ENCODE measurements at regions of chr1 and their contacts with region 1.

Region 1: DNA sequence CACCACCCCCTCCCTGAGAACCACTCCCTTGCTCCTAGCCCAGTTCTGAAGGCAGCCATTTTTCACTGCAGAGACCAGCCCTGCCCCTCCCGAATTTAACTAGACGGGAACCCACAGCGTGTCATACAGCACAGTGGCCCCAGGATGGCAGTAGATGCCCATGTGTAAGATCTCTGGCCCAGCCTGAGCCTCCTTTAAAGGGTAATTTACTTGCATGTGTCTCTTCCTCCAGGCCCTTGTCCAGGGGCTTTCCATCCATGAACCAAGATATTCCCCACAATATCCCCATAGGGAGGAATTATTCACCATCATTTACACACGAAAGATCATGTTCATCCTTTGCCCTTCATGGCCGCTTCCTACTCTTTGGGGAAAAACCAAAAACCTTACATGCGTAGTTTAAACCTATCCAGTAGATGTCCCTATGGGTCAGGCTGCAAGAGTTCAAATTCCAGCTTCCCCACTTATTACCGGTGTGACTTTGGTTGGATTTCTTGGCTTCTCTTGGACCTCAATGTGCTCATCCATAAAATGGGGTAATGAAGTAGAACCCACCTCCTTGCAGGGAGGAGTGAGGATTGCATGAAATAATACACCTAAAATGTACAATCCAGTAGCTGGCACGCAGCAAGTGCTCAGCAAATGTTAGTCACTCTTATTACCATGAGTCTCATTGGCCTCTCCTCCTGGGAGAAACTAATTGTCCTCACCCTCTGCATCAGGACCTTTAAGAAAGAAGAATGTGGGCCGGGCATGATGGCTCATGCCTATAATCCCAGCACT is 4.0 kb upstream of the LACTBL1 start:
- DNase-seq: peak; percentile 68
- H3K4me3 Mint-ChIP-seq: no peak overlapping the region
- H3K27ac Mint-ChIP-seq: peak overlapping the region; percentile 47
- H3K4me1 Mint-ChIP-seq: peaks cover 26% of the 10 kb centered on the region
- H3K27me3 Mint-ChIP-seq: peaks cover 12% of the 10 kb centered on the region
- CTCF ChIP-seq: peak; percentile 66

Region 2: GRCh38 chr1:23019863-23020625 is 43.4 kb after region 1 on chr1:
- CTCF ChIA-PET with region 1: interaction called, 3 read pairs
- intact Hi-C with region 1: loop called (anchors 2 kb)
- DNase-seq: peak; percentile 24
- H3K4me3 Mint-ChIP-seq: peak overlapping the region; percentile 97
- H3K27ac Mint-ChIP-seq: peak overlapping the region; percentile 87
- H3K4me1 Mint-ChIP-seq: peaks cover 17% of the 10 kb centered on the region
- H3K27me3 Mint-ChIP-seq: no peaks in the 10 kb centered on the region
- CTCF ChIP-seq: no peak

Region 3: DNA sequence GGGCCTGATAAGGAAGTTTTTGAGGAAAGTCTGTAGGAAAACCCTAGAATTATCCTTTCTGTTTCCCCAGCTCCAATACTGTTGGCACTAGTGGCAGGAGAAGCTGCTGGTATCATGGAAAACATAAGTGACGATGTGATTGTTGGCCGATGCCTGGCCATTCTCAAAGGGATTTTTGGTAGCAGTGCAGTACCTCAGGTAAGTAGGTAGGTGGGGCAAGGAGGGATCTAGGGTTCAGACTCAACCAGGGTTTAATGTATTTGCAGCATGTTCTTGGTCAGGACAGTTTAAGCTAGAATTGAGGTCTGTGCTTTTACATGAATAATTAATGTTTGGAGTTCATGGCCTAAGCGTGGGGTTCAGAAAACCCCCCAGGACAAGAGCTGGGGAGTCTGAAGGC is 104.7 kb after region 1 on chr1:
- CTCF ChIA-PET with region 1: no interaction called
- intact Hi-C with region 1: loop called (anchors 5 kb)
- DNase-seq: no peak
- H3K4me3 Mint-ChIP-seq: no peak overlapping the region
- H3K27ac Mint-ChIP-seq: no peak overlapping the region
- H3K4me1 Mint-ChIP-seq: no peaks in the 10 kb centered on the region
- H3K27me3 Mint-ChIP-seq: no peaks in the 10 kb centered on the region
- CTCF ChIP-seq: no peak

Region 4: DNA sequence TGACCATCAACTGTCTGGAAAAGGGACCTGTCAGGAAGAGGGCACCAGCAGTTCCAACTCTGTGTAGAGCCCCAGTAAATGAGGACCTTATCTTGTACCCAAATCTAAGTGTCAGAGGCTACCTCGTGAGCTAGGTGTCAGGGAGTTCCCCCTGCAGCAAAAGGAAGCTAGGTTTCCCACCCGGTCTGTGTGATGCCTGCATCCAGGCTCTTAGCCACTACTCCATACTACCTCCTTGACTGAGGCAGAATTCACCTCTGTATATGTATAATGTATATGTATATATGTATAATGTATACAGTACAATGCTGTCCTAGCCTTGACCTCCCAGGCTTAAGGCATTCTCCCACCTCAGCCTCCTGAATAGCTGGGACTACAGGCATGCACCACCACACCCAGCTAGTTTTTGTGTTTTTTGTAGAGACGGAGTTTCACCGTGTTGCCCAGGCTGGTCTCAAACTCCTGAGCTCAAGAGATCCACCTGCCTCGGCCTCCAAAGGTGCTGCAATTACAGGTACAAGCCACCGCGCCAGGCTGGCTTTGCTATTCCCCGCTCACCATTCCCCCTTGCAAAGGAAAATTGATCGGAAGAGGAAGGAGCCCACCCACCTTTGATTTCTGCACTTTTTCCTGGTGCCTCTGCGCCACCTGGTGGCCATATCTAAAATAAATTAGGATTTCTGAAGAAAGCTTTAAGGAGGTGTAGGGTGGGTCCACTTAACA is 207.7 kb after region 1 on chr1:
- CTCF ChIA-PET with region 1: interaction called, 4 read pairs
- intact Hi-C with region 1: loop called (anchors 2 kb)
- DNase-seq: peak; percentile 27
- H3K4me3 Mint-ChIP-seq: peak overlapping the region; percentile 41
- H3K27ac Mint-ChIP-seq: no peak overlapping the region
- H3K4me1 Mint-ChIP-seq: peaks cover 11% of the 10 kb centered on the region
- H3K27me3 Mint-ChIP-seq: no peaks in the 10 kb centered on the region
- CTCF ChIP-seq: peak; percentile 64